Dorsolateral prefrontal cortex (tissue), 120 donors: ENCODE measurements at regions of chr19 and their contacts with region 1.

Region 1: DNA sequence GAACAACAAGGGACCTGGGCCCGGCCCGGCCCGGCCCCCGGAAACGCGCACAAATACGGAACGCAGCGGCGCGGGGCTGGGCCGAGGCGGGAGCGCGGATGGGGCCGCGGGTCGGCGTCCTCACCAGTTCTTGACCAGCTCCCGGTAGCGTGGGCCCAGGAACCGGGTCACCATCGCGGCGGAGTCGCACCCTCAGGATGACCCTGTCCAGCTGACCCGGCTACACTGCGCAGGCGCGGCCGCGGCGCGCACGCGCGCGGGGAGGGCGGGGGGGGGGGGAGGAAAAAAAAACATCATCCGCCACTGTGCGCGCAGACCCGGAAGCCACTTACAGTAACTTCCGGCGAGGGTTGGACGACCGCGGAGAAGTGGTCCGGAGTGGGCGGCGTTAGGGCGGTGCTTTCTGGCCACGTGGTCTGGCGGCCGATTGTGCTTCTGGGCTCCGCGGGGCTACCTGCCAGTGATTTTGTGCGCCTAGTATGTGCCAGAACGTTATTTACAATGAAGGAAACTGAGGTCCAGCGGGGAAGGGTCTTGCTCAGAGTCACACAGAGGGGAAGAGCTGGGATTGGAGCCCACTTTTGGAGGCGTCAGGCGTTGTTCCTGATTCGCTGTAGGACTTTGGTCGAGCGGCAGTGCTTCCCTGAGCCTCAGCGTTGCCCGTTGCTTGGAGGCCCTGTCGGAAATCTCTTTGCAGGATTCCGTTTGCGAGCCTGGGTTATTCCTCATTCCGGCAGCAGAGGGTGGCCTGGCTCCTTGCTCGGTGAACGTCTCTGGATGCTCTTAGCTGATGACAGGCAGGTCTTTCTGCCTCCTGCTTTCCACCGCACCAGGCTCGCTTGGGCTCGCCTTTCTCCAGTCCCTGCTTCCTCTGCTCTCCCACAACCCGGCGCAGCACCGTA is at the start of gene UQCR11:
- DNase-seq: peak; percentile 94 to 98 (median 96)
- H3K4me3 ChIP-seq: peak within 1 kb of the TSS; percentile 71 to 100 (median 99)
- H3K27ac ChIP-seq: peak within 1 kb of the TSS; percentile 61 to 98 (median 93)
- H3K27me3 ChIP-seq: no peaks in the 10 kb centered on the region
- CTCF ChIP-seq: peak in 54 of 56 donors; percentile 20 to 72 (median 58)
- total RNA-seq, gene UQCR11: 112 to 243 (median 173) TPM

Region 2: GRCh38 chr19:1560286-1560882 is 45.1 kb before region 1 on chr19:
- intact Hi-C with region 1: loop called (anchors 5 kb)
- DNase-seq: no peak
- H3K4me3 ChIP-seq: no peak overlapping the region
- H3K27ac ChIP-seq: peak overlapping the region in 1 of 59 donors; percentile 52
- H3K27me3 ChIP-seq: no peaks in the 10 kb centered on the region
- CTCF ChIP-seq: no peak

Region 3: GRCh38 chr19:1568320-1569019 is 37.0 kb before region 1 on chr19 and contains the start of gene MEX3D:
- intact Hi-C with region 1: loop called (anchors 5 kb)
- DNase-seq: peak in 8 of 10 donors; percentile 21 to 76 (median 52)
- H3K4me3 ChIP-seq: peak within 1 kb of the TSS; percentile 58 to 87 (median 73)
- H3K27ac ChIP-seq: peak within 1 kb of the TSS in 56 of 59 donors; percentile 53 to 97 (median 91)
- H3K27me3 ChIP-seq: no peaks in the 10 kb centered on the region
- CTCF ChIP-seq: no peak
- total RNA-seq, gene MEX3D: 12.9 to 38.7 (median 20.5) TPM

Region 4: DNA sequence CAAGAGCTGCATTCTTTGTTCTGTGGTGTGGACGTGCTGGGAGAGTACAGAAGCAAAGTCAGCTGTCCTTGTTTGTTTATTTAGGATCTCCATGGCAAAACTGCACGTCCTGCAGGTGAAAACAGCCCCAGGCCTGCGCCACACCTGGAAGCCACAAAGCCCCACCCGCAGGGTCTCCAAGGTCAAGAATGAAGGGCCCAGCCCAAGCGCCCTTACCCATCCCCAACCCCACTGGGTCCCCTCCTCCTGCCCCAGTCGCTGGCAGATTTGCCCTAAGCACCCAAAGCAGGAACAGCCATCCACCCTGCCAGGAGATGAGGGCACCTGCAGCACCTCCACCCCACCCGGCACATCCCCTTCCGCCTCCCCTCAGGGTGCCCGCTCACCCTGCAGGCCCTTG is 23.3 kb before region 1 on chr19:
- intact Hi-C with region 1: no loop called
- DNase-seq: no peak
- H3K4me3 ChIP-seq: no peak overlapping the region
- H3K27ac ChIP-seq: no peak overlapping the region
- H3K27me3 ChIP-seq: no peaks in the 10 kb centered on the region
- CTCF ChIP-seq: no peak

Region 5: GRCh38 chr19:1592755-1593500 is 12.6 kb before region 1 on chr19 and contains the start of gene MBD3:
- intact Hi-C with region 1: loop called in 1 of 2 experiments (anchors 1 kb)
- DNase-seq: peak; percentile 89 to 96 (median 94)
- H3K4me3 ChIP-seq: peak within 1 kb of the TSS; percentile 61 to 94 (median 84)
- H3K27ac ChIP-seq: peak within 1 kb of the TSS; percentile 41 to 98 (median 93)
- H3K27me3 ChIP-seq: no peaks in the 10 kb centered on the region
- CTCF ChIP-seq: peak in 25 of 56 donors; percentile 7 to 44 (median 24)
- total RNA-seq, gene MBD3: 59.7 to 192 (median 85.4) TPM

Region 6: GRCh38 chr19:1652471-1653299 is 47.2 kb after region 1 on chr19 and contains the start of gene TCF3:
- intact Hi-C with region 1: loop called (anchors 1 to 5 kb)
- DNase-seq: peak; percentile 97 to 99 (median 99)
- H3K4me3 ChIP-seq: peak within 1 kb of the TSS; percentile 65 to 89 (median 78)
- H3K27ac ChIP-seq: peak within 1 kb of the TSS; percentile 96 to 100 (median 99)
- H3K27me3 ChIP-seq: no peaks in the 10 kb centered on the region
- CTCF ChIP-seq: peak in 18 of 56 donors; percentile 7 to 47 (median 22)
- total RNA-seq, gene TCF3: 15.2 to 51.5 (median 25.4) TPM

Region 7: GRCh38 chr19:1672038-1672768 is 66.7 kb after region 1 on chr19:
- intact Hi-C with region 1: loop called (anchors 5 kb)
- DNase-seq: peak in 1 of 10 donors; percentile 23
- H3K4me3 ChIP-seq: peak overlapping the region in 23 of 59 donors; percentile 3 to 50 (median 27)
- H3K27ac ChIP-seq: no peak overlapping the region
- H3K27me3 ChIP-seq: peaks cover 0 to 93% (median 82%) of the 10 kb centered on the region in 45 donors
- CTCF ChIP-seq: peak; percentile 45 to 92 (median 75)

Region 8: DNA sequence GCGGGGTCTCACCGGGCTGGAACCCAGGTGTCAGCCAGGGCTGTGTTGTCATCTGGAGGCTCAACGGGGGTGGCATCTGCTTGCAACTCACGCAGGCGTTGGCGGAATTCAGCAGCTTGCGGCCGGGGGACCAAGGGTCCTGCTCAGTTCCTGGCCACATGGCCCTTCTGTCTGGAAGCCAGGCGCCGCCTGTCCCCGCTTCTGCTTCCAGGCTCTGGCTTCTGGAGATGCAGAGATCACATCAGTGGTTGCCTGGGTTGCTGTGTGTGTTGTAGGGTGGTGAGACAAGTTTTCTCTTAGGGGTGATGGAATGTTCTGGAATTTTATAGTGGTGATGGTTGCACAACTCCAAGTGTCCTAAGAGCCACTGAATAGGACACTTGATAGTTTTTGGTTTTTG is 304.7 kb after region 1 on chr19:
- intact Hi-C with region 1: no loop called
- DNase-seq: peak in 2 of 10 donors; percentile 62 to 63
- H3K4me3 ChIP-seq: peak overlapping the region in 32 of 59 donors; percentile 3 to 58 (median 34)
- H3K27ac ChIP-seq: peak overlapping the region in 56 of 59 donors; percentile 29 to 98 (median 88)
- H3K27me3 ChIP-seq: no peaks in the 10 kb centered on the region
- CTCF ChIP-seq: no peak